CD4-positive, alpha-beta T cell (primary cell): ENCODE measurements at regions of chr4 and their contacts with region 1.

Region 1: GRCh38 chr4:128809477-128810330 is at the start of gene JADE1:
- DNase-seq: peak; percentile 82 to 95 (median 89)
- ATAC-seq: peak; percentile 58
- H3K4me3 ChIP-seq: peak within 1 kb of the TSS; percentile 80
- H3K4me3 Mint-ChIP-seq: peak within 1 kb of the TSS; percentile 97
- H3K27ac ChIP-seq: peak within 1 kb of the TSS; percentile 50 to 91
- H3K27ac Mint-ChIP-seq: peak within 1 kb of the TSS; percentile 93
- H3K4me1 ChIP-seq: peaks cover 9% of the 10 kb centered on the region
- H3K4me1 Mint-ChIP-seq: peaks cover 17% of the 10 kb centered on the region
- H3K27me3 ChIP-seq: no peaks in the 10 kb centered on the region
- H3K27me3 Mint-ChIP-seq: no peaks in the 10 kb centered on the region
- CTCF ChIP-seq: peak; percentile 44
- total RNA-seq, gene JADE1: 57.1 to 58.4 TPM

Region 2: DNA sequence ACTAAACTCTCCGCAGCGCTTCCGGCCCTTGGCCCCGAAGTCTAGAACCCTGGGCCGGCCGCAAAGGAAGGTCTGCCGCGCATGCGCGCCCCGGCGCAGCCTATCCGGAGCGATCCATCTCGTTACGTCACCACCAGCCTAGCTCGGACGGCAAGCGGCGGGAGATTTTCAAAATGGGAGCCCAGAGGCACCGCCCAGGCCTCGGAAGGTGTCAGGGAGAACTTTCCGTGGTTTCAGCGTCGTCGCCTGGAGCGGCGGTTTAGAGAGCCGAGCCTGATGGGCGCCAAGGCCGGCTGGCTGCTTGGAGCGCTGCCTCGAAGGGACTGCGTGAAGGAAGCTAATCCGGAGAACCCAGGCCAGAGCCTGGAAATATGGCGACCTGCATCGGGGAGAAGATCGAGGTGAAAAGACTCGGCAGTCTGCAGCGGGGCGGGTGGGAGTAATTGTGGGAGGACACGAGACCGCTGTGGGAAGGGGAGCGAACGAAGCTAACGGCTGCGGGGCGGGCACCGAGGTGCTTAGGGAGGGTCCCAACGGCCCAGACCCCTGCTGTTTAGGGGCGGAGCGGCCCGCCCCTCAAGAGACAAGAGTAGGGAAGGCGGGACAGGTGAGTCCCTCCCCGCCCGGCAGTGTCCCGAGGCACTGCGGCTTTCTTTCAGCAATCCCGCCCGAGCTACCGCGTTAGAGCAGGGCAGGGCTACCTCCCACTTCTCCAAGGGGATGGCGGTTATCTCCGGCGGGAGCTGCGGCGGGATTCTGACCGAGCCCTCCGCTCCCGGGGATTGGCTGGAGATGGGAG is 928.7 kb before region 1 on chr4 and contains the start of gene PLK4:
- CTCF ChIA-PET with region 1: no interaction called
- POLR2A ChIA-PET with region 1: interaction called, 3 read pairs
- intact Hi-C with region 1: loop called in 1 of 2 experiments (anchors 5 kb)
- DNase-seq: peak; percentile 86 to 97 (median 92)
- ATAC-seq: peak; percentile 89
- H3K4me3 ChIP-seq: peak within 1 kb of the TSS; percentile 80
- H3K4me3 Mint-ChIP-seq: peak within 1 kb of the TSS; percentile 95
- H3K27ac ChIP-seq: peak within 1 kb of the TSS; percentile 73 to 76
- H3K27ac Mint-ChIP-seq: peak within 1 kb of the TSS; percentile 99
- H3K4me1 ChIP-seq: peaks cover 11% of the 10 kb centered on the region
- H3K4me1 Mint-ChIP-seq: peaks cover 29% of the 10 kb centered on the region
- H3K27me3 ChIP-seq: no peaks in the 10 kb centered on the region
- H3K27me3 Mint-ChIP-seq: no peaks in the 10 kb centered on the region
- CTCF ChIP-seq: no peak
- total RNA-seq, gene PLK4: 2.7 to 3.4 TPM

Region 3: GRCh38 chr4:127965062-127965802 is 844.5 kb before region 1 on chr4 and contains the starts of genes ABHD18 and MFSD8:
- CTCF ChIA-PET with region 1: no interaction called
- POLR2A ChIA-PET with region 1: interaction called, 19 read pairs
- intact Hi-C with region 1: loop called (anchors 5 to 10 kb)
- DNase-seq: peak; percentile 97 to 100 (median 99)
- ATAC-seq: peak; percentile 86
- H3K4me3 ChIP-seq: peak within 1 kb of the TSS; percentile 82
- H3K4me3 Mint-ChIP-seq: peak within 1 kb of the TSS; percentile 97
- H3K27ac ChIP-seq: peak within 1 kb of the TSS; percentile 92 to 93
- H3K27ac Mint-ChIP-seq: peak within 1 kb of the TSS; percentile 95
- H3K4me1 ChIP-seq: peaks cover 31% of the 10 kb centered on the region
- H3K4me1 Mint-ChIP-seq: peaks cover 59% of the 10 kb centered on the region
- H3K27me3 ChIP-seq: no peaks in the 10 kb centered on the region
- H3K27me3 Mint-ChIP-seq: no peaks in the 10 kb centered on the region
- CTCF ChIP-seq: no peak
- total RNA-seq, gene ABHD18: 15.1 to 17.0 TPM
- total RNA-seq, gene MFSD8: 25.0 to 28.0 TPM

Region 4: DNA sequence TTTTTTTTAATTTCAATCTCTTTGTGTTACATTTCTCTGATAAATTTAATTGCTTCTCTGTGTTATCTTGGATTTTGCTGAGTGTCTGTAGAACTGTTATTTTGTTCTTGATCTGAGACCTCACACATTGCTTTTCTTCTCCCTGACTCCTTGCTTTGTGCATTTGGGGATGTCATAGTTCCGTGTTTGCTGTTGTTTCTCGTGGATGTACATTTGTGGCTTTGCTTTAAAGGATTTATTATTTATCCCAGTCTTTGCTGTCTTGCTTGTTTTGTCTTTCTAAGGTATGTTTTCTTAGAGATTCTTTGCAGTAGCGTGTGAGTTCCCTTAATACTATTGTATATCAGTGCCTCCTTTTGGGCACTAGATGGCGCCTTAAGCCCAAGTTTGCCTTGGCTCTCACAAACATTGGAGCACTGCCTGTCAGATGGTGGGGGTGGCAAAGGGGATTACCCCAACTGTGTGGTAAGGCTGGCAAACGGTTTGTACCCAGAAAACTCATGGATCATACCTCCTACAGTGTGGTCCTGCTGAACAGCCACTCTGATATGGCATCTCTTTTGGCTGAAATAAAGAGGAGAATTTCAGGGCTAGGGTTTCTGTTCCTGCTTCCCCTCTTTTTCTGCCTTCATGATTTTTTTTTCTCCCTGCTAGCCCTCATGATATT is 618.5 kb before region 1 on chr4:
- CTCF ChIA-PET with region 1: no interaction called
- POLR2A ChIA-PET with region 1: no interaction called
- intact Hi-C with region 1: loop called (anchors 1 to 5 kb)
- DNase-seq: peak; percentile 48 to 86 (median 58)
- ATAC-seq: peak; percentile 100
- H3K4me3 ChIP-seq: no peak overlapping the region
- H3K4me3 Mint-ChIP-seq: no peak overlapping the region
- H3K27ac ChIP-seq: no peak overlapping the region
- H3K27ac Mint-ChIP-seq: no peak overlapping the region
- H3K4me1 ChIP-seq: no peaks in the 10 kb centered on the region
- H3K4me1 Mint-ChIP-seq: no peaks in the 10 kb centered on the region
- H3K27me3 ChIP-seq: no peaks in the 10 kb centered on the region
- H3K27me3 Mint-ChIP-seq: no peaks in the 10 kb centered on the region
- CTCF ChIP-seq: peak; percentile 96

Region 5: GRCh38 chr4:128454281-128455075 is 355.2 kb before region 1 on chr4:
- CTCF ChIA-PET with region 1: no interaction called
- POLR2A ChIA-PET with region 1: no interaction called
- intact Hi-C with region 1: loop called in 1 of 2 experiments (anchors 2 kb)
- DNase-seq: peak; percentile 26 to 76 (median 46)
- ATAC-seq: peak; percentile 99
- H3K4me3 ChIP-seq: no peak overlapping the region
- H3K4me3 Mint-ChIP-seq: no peak overlapping the region
- H3K27ac ChIP-seq: no peak overlapping the region
- H3K27ac Mint-ChIP-seq: no peak overlapping the region
- H3K4me1 ChIP-seq: peaks cover 3% of the 10 kb centered on the region
- H3K4me1 Mint-ChIP-seq: no peaks in the 10 kb centered on the region
- H3K27me3 ChIP-seq: no peaks in the 10 kb centered on the region
- H3K27me3 Mint-ChIP-seq: peaks cover 9% of the 10 kb centered on the region
- CTCF ChIP-seq: peak; percentile 65

Region 6: DNA sequence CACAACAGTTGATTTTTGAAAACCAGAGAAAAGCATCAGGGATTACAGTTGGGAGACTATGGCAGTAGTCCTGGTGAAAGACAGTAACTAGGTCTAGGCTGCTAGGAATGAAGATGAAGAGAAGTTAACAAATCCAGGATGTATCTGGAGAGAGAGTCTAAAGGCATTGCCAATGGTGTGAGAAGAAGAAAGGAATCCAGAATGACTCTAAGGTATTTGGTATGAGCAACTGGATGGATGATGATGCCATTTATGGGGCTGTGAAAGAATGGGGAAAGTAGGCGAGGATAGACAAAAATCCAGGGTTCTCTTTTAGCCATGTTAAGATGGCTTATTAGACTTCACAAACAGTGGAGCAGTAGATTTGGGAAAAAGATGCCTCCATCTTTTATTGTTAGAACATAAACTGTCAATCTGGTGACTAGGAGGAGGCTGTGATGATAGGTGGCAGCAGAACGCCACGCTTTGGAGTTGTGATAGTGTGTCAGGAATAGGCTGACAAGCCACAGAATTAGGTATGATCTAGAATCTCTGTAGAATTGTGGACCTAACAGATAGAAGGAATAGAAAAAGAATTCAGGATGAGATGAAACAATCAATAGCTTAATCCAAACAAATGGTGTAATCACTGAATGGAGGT is 27.5 kb before region 1 on chr4:
- CTCF ChIA-PET with region 1: interaction called, 13 read pairs
- POLR2A ChIA-PET with region 1: no interaction called
- intact Hi-C with region 1: no loop called
- DNase-seq: peak; percentile 38 to 80 (median 60)
- ATAC-seq: peak; percentile 77
- H3K4me3 ChIP-seq: no peak overlapping the region
- H3K4me3 Mint-ChIP-seq: no peak overlapping the region
- H3K27ac ChIP-seq: no peak overlapping the region
- H3K27ac Mint-ChIP-seq: no peak overlapping the region
- H3K4me1 ChIP-seq: no peaks in the 10 kb centered on the region
- H3K4me1 Mint-ChIP-seq: no peaks in the 10 kb centered on the region
- H3K27me3 ChIP-seq: no peaks in the 10 kb centered on the region
- H3K27me3 Mint-ChIP-seq: no peaks in the 10 kb centered on the region
- CTCF ChIP-seq: peak; percentile 73

Region 7: GRCh38 chr4:128863312-128864075 is 53.8 kb after region 1 on chr4:
- CTCF ChIA-PET with region 1: interaction called, 4 read pairs
- POLR2A ChIA-PET with region 1: interaction called, 12 read pairs
- intact Hi-C with region 1: loop called (anchors 2 kb)
- DNase-seq: peak; percentile 39 to 84 (median 61)
- ATAC-seq: peak; percentile 35
- H3K4me3 ChIP-seq: no peak overlapping the region
- H3K4me3 Mint-ChIP-seq: no peak overlapping the region
- H3K27ac ChIP-seq: peak overlapping the region; percentile 18 to 26
- H3K27ac Mint-ChIP-seq: peak overlapping the region; percentile 70
- H3K4me1 ChIP-seq: peaks cover 27% of the 10 kb centered on the region
- H3K4me1 Mint-ChIP-seq: peaks cover 55% of the 10 kb centered on the region
- H3K27me3 ChIP-seq: no peaks in the 10 kb centered on the region
- H3K27me3 Mint-ChIP-seq: no peaks in the 10 kb centered on the region
- CTCF ChIP-seq: peak; percentile 98